ENCODE measurements at regions of chr12 and their contacts with region 1.

Region 1: GRCh38 chr12:32106517-32107358 is at the start of gene BICD1:
- DNase-seq: peak; percentile 96
- H3K4me3 ChIP-seq: peak within 1 kb of the TSS; percentile 86 to 99
- H3K27ac ChIP-seq: peak within 1 kb of the TSS; percentile 70 to 91
- H3K4me1 ChIP-seq: peaks cover 4 to 17% of the 10 kb centered on the region in 2 experiments; a peak in 3 of 4 replicates
- H3K27me3 ChIP-seq: no peaks in the 10 kb centered on the region
- CTCF ChIP-seq: peak; percentile 48
- EP300 ChIP-seq: peak in 1 of 2 experiments; percentile 42; a peak in 1 of 4 replicates
- RAD21 ChIP-seq: peak; percentile 37
- polyA plus RNA-seq, gene BICD1: 12.1 and 13.2 TPM in 2 replicates

Region 2: DNA sequence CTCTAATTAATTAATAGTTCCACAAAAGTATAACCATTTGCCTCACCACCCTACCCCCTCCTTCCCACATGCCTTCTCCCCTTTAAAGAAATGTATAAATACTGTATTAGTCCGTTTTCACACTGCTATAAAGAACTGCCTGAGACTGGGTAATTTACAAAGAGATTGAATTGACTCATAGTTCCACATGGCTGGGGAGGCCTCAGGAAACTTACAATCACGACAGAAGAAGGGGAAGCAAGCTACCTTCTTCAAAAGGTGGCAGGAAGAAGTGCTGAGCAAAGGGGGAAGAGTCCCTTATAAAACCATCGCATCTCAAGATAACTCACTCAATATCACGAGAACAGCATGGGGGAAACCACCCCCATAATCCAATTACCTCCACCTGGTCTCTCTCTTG is 155.7 kb before region 1 on chr12:
- CTCF ChIA-PET with region 1: no interaction called
- POLR2A ChIA-PET with region 1: no interaction called
- DNase-seq: no peak
- H3K4me3 ChIP-seq: no peak overlapping the region
- H3K27ac ChIP-seq: no peak overlapping the region
- H3K4me1 ChIP-seq: no peaks in the 10 kb centered on the region
- H3K27me3 ChIP-seq: no peaks in the 10 kb centered on the region
- CTCF ChIP-seq: no peak
- EP300 ChIP-seq: no peak
- RAD21 ChIP-seq: no peak

Region 3: GRCh38 chr12:32069071-32069470 is 37.7 kb before region 1 on chr12:
- CTCF ChIA-PET with region 1: interaction called, 10 read pairs
- POLR2A ChIA-PET with region 1: no interaction called
- DNase-seq: peak; percentile 44
- H3K4me3 ChIP-seq: no peak overlapping the region
- H3K27ac ChIP-seq: peak overlapping the region; percentile 64 to 74; a peak in 3 of 4 replicates
- H3K4me1 ChIP-seq: peaks cover 5 to 16% of the 10 kb centered on the region in 2 experiments
- H3K27me3 ChIP-seq: no peaks in the 10 kb centered on the region
- CTCF ChIP-seq: no peak
- EP300 ChIP-seq: peak; percentile 71 to 96; a peak in 3 of 4 replicates
- RAD21 ChIP-seq: no peak; the same call in 1 of the 2 replicates

Region 4: DNA sequence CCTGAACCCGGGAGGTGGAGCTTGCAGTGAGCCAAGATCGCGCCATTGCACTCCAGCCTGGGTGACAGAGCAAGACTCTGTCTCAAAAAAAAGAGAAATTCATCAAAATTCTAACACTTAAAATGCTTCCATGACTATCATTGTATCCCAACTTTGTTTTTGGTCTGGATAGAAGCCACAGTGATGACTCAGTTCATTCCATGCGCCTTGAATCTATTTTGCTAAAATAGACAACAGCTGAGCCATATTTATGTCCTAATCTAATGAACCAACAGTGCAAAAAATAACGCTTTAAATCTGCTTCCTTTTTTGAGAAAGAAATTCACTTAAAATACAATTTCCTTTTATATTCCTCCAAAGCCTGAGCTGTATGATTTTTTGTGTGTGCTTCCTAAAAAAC is 23.2 kb before region 1 on chr12:
- CTCF ChIA-PET with region 1: interaction called, 11 read pairs
- POLR2A ChIA-PET with region 1: interaction called, 11 read pairs
- DNase-seq: no peak
- H3K4me3 ChIP-seq: no peak overlapping the region
- H3K27ac ChIP-seq: peak overlapping the region; percentile 11 to 52; a peak in 3 of 4 replicates
- H3K4me1 ChIP-seq: peaks cover 0 to 5% of the 10 kb centered on the region in 2 experiments; a peak in 1 of 4 replicates
- H3K27me3 ChIP-seq: no peaks in the 10 kb centered on the region
- CTCF ChIP-seq: no peak
- EP300 ChIP-seq: peak in 1 of 2 experiments; percentile 53; a peak in 1 of 4 replicates
- RAD21 ChIP-seq: no peak

Region 5: GRCh38 chr12:32089586-32089985 is 17.2 kb before region 1 on chr12:
- CTCF ChIA-PET with region 1: interaction called, 11 read pairs
- POLR2A ChIA-PET with region 1: interaction called, 11 read pairs
- DNase-seq: peak; percentile 83
- H3K4me3 ChIP-seq: no peak overlapping the region
- H3K27ac ChIP-seq: peak overlapping the region; percentile 27 to 96; a peak in 3 of 4 replicates
- H3K4me1 ChIP-seq: peaks cover 0 to 14% of the 10 kb centered on the region in 2 experiments; a peak in 2 of 4 replicates
- H3K27me3 ChIP-seq: no peaks in the 10 kb centered on the region
- CTCF ChIP-seq: no peak
- EP300 ChIP-seq: peak; percentile 8 to 96; a peak in 3 of 4 replicates
- RAD21 ChIP-seq: peak; percentile 41

Measured in SK-N-SH (cell line).